CD8-positive, alpha-beta memory T cell (primary cell): ENCODE measurements at regions of chr17 and their contacts with region 1.

Region 1: GRCh38 chr17:7351665-7352501 is at the start of gene KCTD11:
- DNase-seq: peak; percentile 62 to 90 (median 80)
- H3K4me3 ChIP-seq: peak within 1 kb of the TSS; percentile 52
- H3K4me3 Mint-ChIP-seq: peak within 1 kb of the TSS; percentile 83 to 93 (median 87)
- H3K27ac ChIP-seq: peak within 1 kb of the TSS; percentile 67
- H3K27ac Mint-ChIP-seq: peak within 1 kb of the TSS; percentile 90 to 98 (median 96)
- H3K4me1 ChIP-seq: peaks cover 30% of the 10 kb centered on the region
- H3K4me1 Mint-ChIP-seq: peaks cover 32 to 65% (median 34%) of the 10 kb centered on the region in 3 donors
- H3K27me3 ChIP-seq: no peaks in the 10 kb centered on the region
- H3K27me3 Mint-ChIP-seq: no peaks in the 10 kb centered on the region
- total RNA-seq, gene KCTD11: 4.6 to 5.1 TPM

Region 2: GRCh38 chr17:7263083-7264078 is 88.5 kb before region 1 on chr17:
- CTCF ChIA-PET with region 1: no interaction called
- POLR2A ChIA-PET with region 1: no interaction called
- DNase-seq: no peak
- H3K4me3 ChIP-seq: peak overlapping the region; percentile 24
- H3K4me3 Mint-ChIP-seq: peak overlapping the region; percentile 81 to 89 (median 85)
- H3K27ac ChIP-seq: peak overlapping the region; percentile 28
- H3K27ac Mint-ChIP-seq: peak overlapping the region in 7 of 8 donors; percentile 8 to 91 (median 73)
- H3K4me1 ChIP-seq: peaks cover 19% of the 10 kb centered on the region
- H3K4me1 Mint-ChIP-seq: peaks cover 21 to 32% (median 23%) of the 10 kb centered on the region in 3 donors
- H3K27me3 ChIP-seq: no peaks in the 10 kb centered on the region
- H3K27me3 Mint-ChIP-seq: peaks cover 8% of the 10 kb centered on the region in 2 donors

Region 3: DNA sequence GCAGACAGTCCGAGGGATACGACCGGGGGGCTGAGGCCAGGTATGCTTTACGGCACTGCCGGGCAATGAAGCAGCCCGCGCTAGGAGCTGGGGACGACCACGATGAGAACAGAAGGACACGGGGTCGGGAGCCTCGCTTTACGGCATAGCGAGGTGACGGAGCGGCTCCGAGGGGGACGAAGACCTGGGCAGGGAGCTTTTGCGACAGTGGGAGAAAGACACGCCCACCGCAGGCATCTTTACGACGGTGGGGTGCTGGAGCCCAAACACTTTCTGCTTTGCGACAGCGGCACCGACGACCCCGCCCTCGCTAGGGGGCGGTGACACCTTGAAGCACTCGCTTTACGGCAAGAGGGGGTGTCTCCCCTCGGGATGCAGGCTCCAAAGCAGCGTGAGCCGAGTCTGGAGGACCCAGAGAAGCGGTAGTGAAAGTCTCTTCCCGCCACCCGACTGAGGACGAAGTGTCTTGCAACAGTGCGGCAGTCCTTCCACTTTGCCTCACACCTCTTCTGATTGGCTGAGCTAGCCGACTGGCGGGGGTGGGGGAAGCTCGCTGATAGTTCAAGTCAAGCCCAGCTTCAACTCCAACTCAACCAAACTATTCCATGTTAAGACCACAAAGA is 22.4 kb before region 1 on chr17:
- CTCF ChIA-PET with region 1: interaction called, 79 read pairs
- POLR2A ChIA-PET with region 1: interaction called, 21 read pairs
- DNase-seq: peak; percentile 92 to 98 (median 97)
- H3K4me3 ChIP-seq: peak overlapping the region; percentile 79
- H3K4me3 Mint-ChIP-seq: peak overlapping the region; percentile 91 to 99 (median 97)
- H3K27ac ChIP-seq: peak overlapping the region; percentile 82
- H3K27ac Mint-ChIP-seq: peak overlapping the region; percentile 95 to 99 (median 97)
- H3K4me1 ChIP-seq: peaks cover 43% of the 10 kb centered on the region
- H3K4me1 Mint-ChIP-seq: peaks cover 33 to 54% (median 42%) of the 10 kb centered on the region in 3 donors
- H3K27me3 ChIP-seq: no peaks in the 10 kb centered on the region
- H3K27me3 Mint-ChIP-seq: peaks cover 0 to 2% of the 10 kb centered on the region in 2 donors

Region 4: GRCh38 chr17:7336240-7337175 is 15.4 kb before region 1 on chr17 and contains the start of gene ACAP1:
- CTCF ChIA-PET with region 1: interaction called, 79 read pairs
- POLR2A ChIA-PET with region 1: interaction called, 24 read pairs
- DNase-seq: peak; percentile 78 to 90 (median 81)
- H3K4me3 ChIP-seq: peak within 1 kb of the TSS; percentile 99
- H3K4me3 Mint-ChIP-seq: peak within 1 kb of the TSS; percentile 88 to 98 (median 93)
- H3K27ac ChIP-seq: peak within 1 kb of the TSS; percentile 74
- H3K27ac Mint-ChIP-seq: peak within 1 kb of the TSS; percentile 89 to 98 (median 97)
- H3K4me1 ChIP-seq: peaks cover 69% of the 10 kb centered on the region
- H3K4me1 Mint-ChIP-seq: peaks cover 47 to 68% (median 66%) of the 10 kb centered on the region in 3 donors
- H3K27me3 ChIP-seq: no peaks in the 10 kb centered on the region
- H3K27me3 Mint-ChIP-seq: no peaks in the 10 kb centered on the region
- total RNA-seq, gene ACAP1: 216 to 225 TPM

Region 5: GRCh38 chr17:7394452-7395191 is 42.7 kb after region 1 on chr17 and contains the start of gene PLSCR3:
- CTCF ChIA-PET with region 1: interaction called, 10 read pairs
- POLR2A ChIA-PET with region 1: no interaction called
- DNase-seq: peak; percentile 76 to 86 (median 83)
- H3K4me3 ChIP-seq: peak within 1 kb of the TSS; percentile 88
- H3K4me3 Mint-ChIP-seq: peak within 1 kb of the TSS; percentile 91 to 99 (median 95)
- H3K27ac ChIP-seq: peak within 1 kb of the TSS; percentile 80
- H3K27ac Mint-ChIP-seq: peak within 1 kb of the TSS; percentile 90 to 98 (median 96)
- H3K4me1 ChIP-seq: peaks cover 35% of the 10 kb centered on the region
- H3K4me1 Mint-ChIP-seq: peaks cover 21 to 46% (median 27%) of the 10 kb centered on the region in 3 donors
- H3K27me3 ChIP-seq: no peaks in the 10 kb centered on the region
- H3K27me3 Mint-ChIP-seq: no peaks in the 10 kb centered on the region
- total RNA-seq, gene PLSCR3: 79.1 to 81.6 TPM

Region 6: GRCh38 chr17:7403977-7404736 is 52.3 kb after region 1 on chr17 and contains the start of gene TMEM256:
- CTCF ChIA-PET with region 1: interaction called, 10 read pairs
- POLR2A ChIA-PET with region 1: interaction called, 4 read pairs
- DNase-seq: peak; percentile 91 to 97 (median 95)
- H3K4me3 ChIP-seq: peak within 1 kb of the TSS; percentile 90
- H3K4me3 Mint-ChIP-seq: peak within 1 kb of the TSS; percentile 90 to 99 (median 97)
- H3K27ac ChIP-seq: peak within 1 kb of the TSS; percentile 67
- H3K27ac Mint-ChIP-seq: peak within 1 kb of the TSS; percentile 83 to 99 (median 96)
- H3K4me1 ChIP-seq: peaks cover 16% of the 10 kb centered on the region
- H3K4me1 Mint-ChIP-seq: peaks cover 17 to 36% (median 21%) of the 10 kb centered on the region in 3 donors
- H3K27me3 ChIP-seq: no peaks in the 10 kb centered on the region
- H3K27me3 Mint-ChIP-seq: peaks cover 0 to 2% of the 10 kb centered on the region in 2 donors
- total RNA-seq, gene TMEM256: 45.4 to 51.4 TPM

Region 7: DNA sequence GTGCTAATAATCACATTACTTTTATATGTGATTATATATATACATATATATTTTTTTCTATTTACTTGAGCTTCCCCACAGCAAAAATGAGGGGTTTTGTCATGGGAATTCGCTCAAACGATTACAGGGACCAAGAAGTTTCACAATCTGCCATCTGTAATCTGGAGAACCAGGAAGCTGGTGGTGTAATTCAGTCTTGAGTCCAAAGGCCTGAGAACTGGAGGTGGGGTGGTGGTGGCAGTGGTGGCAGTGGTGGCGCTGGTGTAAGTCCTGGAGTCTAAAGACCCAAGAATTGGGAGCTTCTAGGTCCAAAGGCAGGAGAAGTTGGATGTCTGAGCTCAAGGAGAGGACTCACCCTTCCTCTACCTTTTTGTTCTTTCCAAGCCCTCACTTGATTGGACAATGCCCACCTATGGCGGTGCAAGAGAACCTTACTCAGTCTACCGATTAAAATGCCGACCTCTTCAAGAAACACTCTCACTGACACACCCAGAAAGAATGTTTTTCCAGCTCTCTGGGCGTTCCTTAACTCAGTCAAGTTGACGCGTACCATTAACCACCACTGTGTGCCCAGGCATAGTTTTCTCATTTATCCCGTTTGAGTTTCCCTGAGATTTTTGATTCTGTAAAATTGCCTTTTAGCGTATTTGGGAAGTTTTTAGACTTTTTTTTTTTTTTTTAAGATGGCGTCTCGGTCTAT is 164.2 kb after region 1 on chr17:
- CTCF ChIA-PET with region 1: interaction called, 10 read pairs
- POLR2A ChIA-PET with region 1: no interaction called
- DNase-seq: no peak
- H3K4me3 ChIP-seq: no peak overlapping the region
- H3K4me3 Mint-ChIP-seq: no peak overlapping the region
- H3K27ac ChIP-seq: no peak overlapping the region
- H3K27ac Mint-ChIP-seq: peak overlapping the region in 4 of 8 donors; percentile 29 to 79 (median 63)
- H3K4me1 ChIP-seq: no peaks in the 10 kb centered on the region
- H3K4me1 Mint-ChIP-seq: no peaks in the 10 kb centered on the region
- H3K27me3 ChIP-seq: no peaks in the 10 kb centered on the region
- H3K27me3 Mint-ChIP-seq: no peaks in the 10 kb centered on the region

Region 8: GRCh38 chr17:7583253-7584109 is 231.6 kb after region 1 on chr17 and contains the start of gene MPDU1:
- CTCF ChIA-PET with region 1: interaction called, 14 read pairs
- POLR2A ChIA-PET with region 1: no interaction called
- DNase-seq: peak; percentile 90 to 97 (median 96)
- H3K4me3 ChIP-seq: peak within 1 kb of the TSS; percentile 98
- H3K4me3 Mint-ChIP-seq: peak within 1 kb of the TSS; percentile 99 to 100 (median 99)
- H3K27ac ChIP-seq: peak within 1 kb of the TSS; percentile 98
- H3K27ac Mint-ChIP-seq: peak within 1 kb of the TSS; percentile 99 to 100 (median 100)
- H3K4me1 ChIP-seq: peaks cover 40% of the 10 kb centered on the region
- H3K4me1 Mint-ChIP-seq: peaks cover 50 to 60% (median 52%) of the 10 kb centered on the region in 3 donors
- H3K27me3 ChIP-seq: no peaks in the 10 kb centered on the region
- H3K27me3 Mint-ChIP-seq: peaks cover 0 to 4% of the 10 kb centered on the region in 2 donors
- total RNA-seq, gene MPDU1: 115 to 124 TPM

Region 9: GRCh38 chr17:7632492-7632894 is 280.6 kb after region 1 on chr17:
- CTCF ChIA-PET with region 1: no interaction called
- POLR2A ChIA-PET with region 1: no interaction called
- DNase-seq: no peak
- H3K4me3 ChIP-seq: no peak overlapping the region
- H3K4me3 Mint-ChIP-seq: peak overlapping the region in 1 of 7 donors; percentile 77
- H3K27ac ChIP-seq: no peak overlapping the region
- H3K27ac Mint-ChIP-seq: peak overlapping the region in 1 of 8 donors; percentile 31
- H3K4me1 ChIP-seq: no peaks in the 10 kb centered on the region
- H3K4me1 Mint-ChIP-seq: peaks cover 3 to 5% (median 4%) of the 10 kb centered on the region in 3 donors
- H3K27me3 ChIP-seq: no peaks in the 10 kb centered on the region
- H3K27me3 Mint-ChIP-seq: no peaks in the 10 kb centered on the region